ENCODE measurements at regions of chr2 and their contacts with region 1.

Region 1: DNA sequence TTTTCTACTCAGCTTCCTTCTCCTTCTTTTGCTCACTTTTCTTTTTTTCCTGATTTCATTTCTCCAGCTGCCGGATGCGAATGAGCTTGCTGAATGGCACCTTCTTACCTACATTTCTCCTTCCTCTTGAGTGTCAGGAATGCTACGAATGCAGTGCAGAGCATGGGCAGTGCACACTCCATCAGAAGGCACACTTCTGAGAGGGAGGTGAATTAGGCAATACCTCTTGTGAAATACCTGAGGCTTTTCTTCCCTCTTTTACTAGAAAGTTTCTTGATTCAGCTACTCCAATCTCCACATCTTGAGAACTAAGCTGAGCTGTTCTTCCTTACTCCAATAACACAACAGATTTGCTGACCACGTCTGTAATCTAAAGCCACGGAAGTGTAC is 51.1 kb downstream of the PLEKHM3 start:
- DNase-seq: no peak
- ATAC-seq: no peak
- H3K4me3 ChIP-seq: no peak overlapping the region
- H3K27ac ChIP-seq: no peak overlapping the region
- H3K4me1 ChIP-seq: no peaks in the 10 kb centered on the region
- H3K27me3 ChIP-seq: no peaks in the 10 kb centered on the region

Region 2: DNA sequence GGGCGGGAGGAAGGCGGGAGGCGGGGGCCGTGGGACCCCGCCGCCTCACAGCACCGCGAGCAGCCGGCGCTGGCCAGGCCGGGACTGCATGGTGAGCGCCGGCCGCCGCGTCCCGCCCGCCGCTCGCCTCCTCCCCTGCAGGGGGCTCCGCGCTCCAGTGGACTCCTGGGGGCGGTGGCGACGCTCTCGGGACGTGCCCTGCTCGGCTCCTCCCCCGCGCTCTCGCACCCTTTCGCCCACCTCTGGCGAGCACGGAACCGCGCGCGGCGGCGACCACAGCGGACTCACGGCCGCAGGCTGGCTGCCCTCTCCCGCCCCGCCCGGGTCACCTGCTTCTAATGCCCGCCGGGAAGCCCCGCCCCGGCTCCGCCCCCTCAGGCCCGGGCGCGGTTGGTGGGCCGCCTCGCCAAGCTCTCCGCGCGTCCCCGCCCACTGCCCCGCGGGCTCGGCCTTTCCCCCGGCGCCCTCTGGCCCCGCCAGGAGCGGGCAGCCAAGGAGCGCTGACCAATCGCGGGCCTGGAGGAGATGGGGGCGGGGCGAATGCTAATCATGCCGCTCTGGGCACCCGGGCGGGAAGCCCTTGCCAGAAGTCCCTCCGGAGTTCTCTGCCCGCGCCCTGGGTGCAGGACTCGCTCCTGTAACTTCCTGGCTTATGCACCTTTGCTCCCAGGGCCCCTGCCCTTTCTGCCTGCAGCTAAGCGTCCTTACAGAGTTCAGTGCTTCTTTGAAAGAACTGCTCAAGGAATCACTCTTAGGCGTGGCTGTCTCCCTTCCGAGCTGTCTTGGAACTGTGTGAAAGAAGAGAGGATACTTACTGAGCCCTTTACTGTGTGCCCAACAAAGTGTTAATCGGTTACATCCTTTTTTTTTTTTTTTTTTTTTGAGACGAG is 204.4 kb before region 1 on chr2 and contains the start of gene FZD5:
- intact Hi-C with region 1: loop called (anchors 5 to 10 kb)
- DNase-seq: peak; percentile 98
- ATAC-seq: peak; percentile 95
- H3K4me3 ChIP-seq: peak within 1 kb of the TSS; percentile 61 to 96
- H3K27ac ChIP-seq: peak within 1 kb of the TSS in 1 of 2 donors; percentile 12
- H3K4me1 ChIP-seq: no peaks in the 10 kb centered on the region
- H3K27me3 ChIP-seq: no peaks in the 10 kb centered on the region
- total RNA-seq, gene FZD5: 3.6 to 4.6 TPM

Region 3: GRCh38 chr2:207902821-207903220 is 71.4 kb before region 1 on chr2:
- intact Hi-C with region 1: no loop called
- DNase-seq: no peak
- ATAC-seq: no peak
- H3K4me3 ChIP-seq: no peak overlapping the region
- H3K27ac ChIP-seq: no peak overlapping the region
- H3K4me1 ChIP-seq: peaks cover 0 to 1% of the 10 kb centered on the region in 2 donors
- H3K27me3 ChIP-seq: no peaks in the 10 kb centered on the region